Head of caudate nucleus (tissue), 42 donors: ENCODE measurements at regions of chr3 and their contacts with region 1.

Region 1: GRCh38 chr3:70531063-70531657 is 218.7 kb upstream of the MDFIC2 start:
- DNase-seq: peak in 2 of 42 donors; percentile 11 to 25

Region 2: DNA sequence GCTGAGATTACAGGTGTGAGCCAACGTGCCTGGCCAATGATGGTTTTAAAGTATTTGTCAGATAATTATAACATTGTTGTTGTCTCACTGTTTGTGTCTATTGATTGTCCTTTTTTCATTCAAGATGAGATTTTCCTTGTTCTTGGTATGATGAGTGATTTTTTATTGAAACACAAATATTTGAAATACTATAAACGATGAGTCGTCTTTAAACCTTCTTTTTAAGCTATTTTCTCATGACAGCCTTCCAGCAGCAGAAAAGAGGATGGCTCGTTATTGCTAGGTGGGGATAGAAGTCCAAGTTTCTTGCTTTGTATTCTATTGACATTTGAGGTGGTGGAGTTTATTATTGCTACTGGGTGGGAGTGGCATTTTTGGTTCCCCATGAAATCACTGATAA is 157.0 kb before region 1 on chr3:
- intact Hi-C with region 1: no loop called
- DNase-seq: no peak

Region 3: DNA sequence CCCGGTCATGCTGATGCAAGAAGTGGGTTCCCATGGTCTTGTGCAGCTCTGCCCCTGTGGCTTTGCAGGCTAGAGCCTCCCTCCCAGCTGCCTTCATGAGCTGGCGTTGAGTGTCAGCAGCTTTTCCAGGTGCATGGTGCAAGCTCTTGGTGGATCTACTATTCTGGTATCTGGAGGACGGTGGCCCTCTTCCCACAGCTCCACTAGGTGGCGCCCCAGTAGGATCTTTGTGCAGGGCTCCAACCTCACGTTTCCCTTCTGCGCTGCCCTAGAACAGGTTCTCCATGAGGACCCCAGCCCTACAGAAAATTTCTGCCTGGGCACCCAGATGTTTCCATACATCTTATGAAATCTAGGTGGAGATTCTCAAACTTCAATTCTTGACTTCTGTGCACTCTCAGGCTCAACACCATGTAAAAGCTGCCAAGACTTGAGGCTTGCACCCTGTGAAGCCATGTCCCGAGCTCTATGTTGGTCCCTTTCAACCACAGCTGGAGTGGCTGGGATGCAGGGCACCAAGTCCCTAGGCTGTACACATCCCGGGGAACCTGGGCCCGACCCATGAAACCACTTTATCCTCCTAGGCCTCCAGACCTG is 19.7 kb after region 1 on chr3:
- intact Hi-C with region 1: no loop called
- DNase-seq: peak in 40 of 42 donors; percentile 18 to 85 (median 54)

Region 4: GRCh38 chr3:71652781-71653413 is 1121.7 kb after region 1 on chr3:
- intact Hi-C with region 1: loop called (anchors 10 kb)
- DNase-seq: peak in 38 of 42 donors; percentile 7 to 74 (median 41)